ENCODE measurements at regions of chr1 and their contacts with region 1.

Region 1: GRCh38 chr1:94335950-94336349 is 82.2 kb upstream of the ABCD3 start:
- DNase-seq: peak; percentile 14
- H3K4me3 ChIP-seq: no peak overlapping the region
- H3K27ac ChIP-seq: no peak overlapping the region
- H3K4me1 ChIP-seq: peaks cover 0 to 18% (median 2%) of the 10 kb centered on the region in 3 donors
- H3K27me3 ChIP-seq: no peaks in the 10 kb centered on the region
- CTCF ChIP-seq: peak; percentile 39 to 94 (median 86)
- POLR2A ChIP-seq: no peak

Region 2: GRCh38 chr1:94061513-94062443 is 274.2 kb before region 1 on chr1:
- intact Hi-C with region 1: loop called (anchors 5 kb)
- DNase-seq: no peak
- H3K4me3 ChIP-seq: no peak overlapping the region
- H3K27ac ChIP-seq: peak overlapping the region in 3 of 4 donors; percentile 19 to 41 (median 35)
- H3K4me1 ChIP-seq: peaks cover 0 to 33% (median 12%) of the 10 kb centered on the region in 3 donors
- H3K27me3 ChIP-seq: peaks cover 0 to 3% (median 0%) of the 10 kb centered on the region in 4 donors
- CTCF ChIP-seq: peak in 5 of 6 experiments; percentile 85 to 91 (median 88)
- POLR2A ChIP-seq: no peak

Region 3: DNA sequence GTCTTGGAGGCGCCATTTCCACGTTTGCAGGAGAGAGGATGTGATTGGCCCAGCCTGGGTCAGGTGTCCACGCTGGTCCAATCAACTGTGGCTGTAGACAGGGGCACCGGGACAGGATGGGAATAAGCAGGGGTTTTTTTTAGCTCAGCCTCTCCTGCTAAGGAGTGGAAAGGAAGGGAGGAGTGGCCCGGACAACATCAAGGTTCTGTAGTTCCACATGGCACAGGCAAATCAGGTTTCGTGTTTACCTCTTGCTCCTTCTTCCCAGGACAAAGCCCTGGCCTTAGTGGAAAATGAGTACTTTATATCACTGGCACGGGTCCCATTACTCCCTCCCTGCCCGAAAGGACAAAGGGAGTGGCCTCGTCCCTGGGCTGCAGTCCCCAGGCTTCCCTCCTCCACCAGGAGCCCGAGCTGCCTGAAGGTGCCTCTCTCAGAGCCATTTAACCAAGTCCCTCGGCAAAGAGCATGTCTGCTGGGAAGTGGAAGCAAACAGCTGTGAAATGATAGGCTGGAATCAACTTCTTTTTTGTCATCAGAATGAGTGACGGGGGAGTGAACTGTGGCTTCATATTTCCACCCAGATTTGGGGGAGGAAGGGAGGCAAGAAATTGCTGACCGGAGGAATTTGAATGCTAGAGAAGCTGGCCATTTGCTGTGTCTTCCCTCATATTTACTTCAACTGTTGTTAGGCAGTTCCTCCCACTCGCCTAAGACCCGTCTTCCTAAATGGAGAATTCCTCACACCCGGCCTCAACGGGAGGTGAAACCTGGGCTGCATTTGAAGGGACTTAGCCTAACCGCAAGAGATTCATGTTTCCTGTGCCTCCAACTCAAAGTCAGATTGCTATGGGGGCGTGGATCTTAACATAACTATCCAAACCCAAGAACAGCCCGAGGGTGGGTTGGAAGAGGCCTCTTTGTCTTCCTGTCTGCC is 399.3 kb after region 1 on chr1:
- intact Hi-C with region 1: no loop called
- DNase-seq: no peak
- H3K4me3 ChIP-seq: no peak overlapping the region
- H3K27ac ChIP-seq: peak overlapping the region in 3 of 4 donors; percentile 1 to 17 (median 2)
- H3K4me1 ChIP-seq: peaks cover 0 to 9% (median 0%) of the 10 kb centered on the region in 3 donors
- H3K27me3 ChIP-seq: no peaks in the 10 kb centered on the region
- CTCF ChIP-seq: no peak
- POLR2A ChIP-seq: no peak

Measured in esophagus squamous epithelium (tissue), 5 donors.